H1 (cell line): ENCODE measurements at regions of chr6 and their contacts with region 1.

Region 1: GRCh38 chr6:99568103-99568933 is at the start of gene CCNC:
- DNase-seq: peak; percentile 93 to 97
- H3K4me3 ChIP-seq: peak within 1 kb of the TSS; percentile 81 to 98 (median 96)
- H3K27ac ChIP-seq: peak within 1 kb of the TSS; percentile 95
- H3K4me1 ChIP-seq: peaks cover 0 to 2% (median 0%) of the 10 kb centered on the region in 4 experiments; a peak in 1 of 7 replicates
- H3K27me3 ChIP-seq: no peaks in the 10 kb centered on the region
- CTCF ChIP-seq: no peak
- EP300 ChIP-seq: peak; percentile 24 to 89
- POLR2A ChIP-seq: peak; percentile 95 to 99
- RAD21 ChIP-seq: no peak; a peak in 1 of 4 replicates
- total RNA-seq, gene CCNC: 94.5 and 107 TPM in 2 replicates

Region 2: DNA sequence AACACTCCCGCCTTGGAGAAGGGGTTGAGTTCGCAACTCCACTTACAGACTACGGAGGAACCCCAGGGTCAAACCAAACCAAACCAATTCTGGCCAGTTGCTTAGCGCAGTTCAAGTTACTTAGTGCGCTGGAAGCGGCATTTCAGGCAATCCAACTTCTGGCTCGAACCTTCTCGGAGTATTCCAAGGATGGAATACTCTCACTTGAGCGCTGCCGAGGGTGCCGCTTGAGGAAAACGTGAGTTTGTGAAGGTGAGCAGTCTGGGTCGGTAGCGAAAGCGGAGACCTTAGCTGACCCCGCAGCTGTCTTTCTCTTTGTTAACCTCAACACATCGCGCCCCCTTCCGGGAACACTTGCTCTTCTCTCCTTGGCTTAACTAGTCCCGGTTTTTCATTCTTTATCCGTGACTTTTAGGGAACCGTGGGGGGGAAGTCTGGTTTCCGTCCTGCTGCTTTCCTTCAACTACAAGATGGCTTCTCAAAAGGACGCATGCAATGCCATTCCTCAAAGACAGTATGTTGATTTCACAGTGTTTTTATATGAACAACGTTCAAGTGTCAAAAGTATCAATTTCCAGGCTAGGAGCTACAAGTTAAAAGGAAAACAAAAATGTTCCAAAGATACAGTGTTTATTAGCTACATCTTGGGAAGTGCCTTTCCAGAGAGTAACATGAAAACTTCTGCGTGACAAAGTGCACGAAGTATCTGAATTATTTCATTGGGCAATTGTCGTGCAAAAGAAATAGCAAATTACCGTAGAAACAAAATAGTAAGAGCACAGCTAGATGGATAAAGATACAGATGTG is 142.5 kb before region 1 on chr6:
- CTCF ChIA-PET with region 1: no interaction called
- POLR2A ChIA-PET with region 1: interaction called, 26 read pairs
- DNase-seq: peak; percentile 87 to 90
- H3K4me3 ChIP-seq: peak overlapping the region; percentile 79 to 99 (median 92)
- H3K27ac ChIP-seq: peak overlapping the region; percentile 97
- H3K4me1 ChIP-seq: peaks cover 0 to 11% (median 5%) of the 10 kb centered on the region in 4 experiments; a peak in 4 of 7 replicates
- H3K27me3 ChIP-seq: no peaks in the 10 kb centered on the region
- CTCF ChIP-seq: peak; percentile 37 to 63 (median 44); a peak in 3 of 4 replicates
- EP300 ChIP-seq: peak in 1 of 2 experiments; percentile 85; a peak in 1 of 3 replicates
- POLR2A ChIP-seq: peak in 1 of 2 experiments; percentile 79; a peak in 2 of 3 replicates
- RAD21 ChIP-seq: peak; percentile 34 to 42

Region 3: DNA sequence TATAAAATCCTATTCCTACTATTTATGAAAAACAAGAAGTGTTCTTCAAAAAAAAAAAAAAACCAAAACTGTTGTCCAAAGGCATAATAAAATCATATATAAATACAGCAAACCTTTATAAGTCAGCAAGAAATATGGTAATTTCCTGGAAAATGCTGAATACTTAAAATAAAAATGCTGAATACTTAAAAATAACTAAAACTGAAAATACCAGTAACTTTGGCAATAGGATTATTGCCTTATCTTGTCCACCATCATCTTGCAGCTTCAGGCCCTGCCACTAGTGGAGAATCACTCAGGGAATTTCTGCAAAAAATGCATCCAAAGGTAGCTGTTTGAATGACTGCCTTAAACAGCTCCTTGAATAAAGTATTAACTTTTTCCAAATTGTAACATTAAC is 24.4 kb before region 1 on chr6:
- CTCF ChIA-PET with region 1: interaction called, 3 read pairs
- POLR2A ChIA-PET with region 1: interaction called, 16 read pairs
- DNase-seq: no peak
- H3K4me3 ChIP-seq: no peak overlapping the region
- H3K27ac ChIP-seq: no peak overlapping the region
- H3K4me1 ChIP-seq: no peaks in the 10 kb centered on the region
- H3K27me3 ChIP-seq: no peaks in the 10 kb centered on the region
- CTCF ChIP-seq: no peak
- EP300 ChIP-seq: no peak
- POLR2A ChIP-seq: no peak
- RAD21 ChIP-seq: no peak

Region 4: DNA sequence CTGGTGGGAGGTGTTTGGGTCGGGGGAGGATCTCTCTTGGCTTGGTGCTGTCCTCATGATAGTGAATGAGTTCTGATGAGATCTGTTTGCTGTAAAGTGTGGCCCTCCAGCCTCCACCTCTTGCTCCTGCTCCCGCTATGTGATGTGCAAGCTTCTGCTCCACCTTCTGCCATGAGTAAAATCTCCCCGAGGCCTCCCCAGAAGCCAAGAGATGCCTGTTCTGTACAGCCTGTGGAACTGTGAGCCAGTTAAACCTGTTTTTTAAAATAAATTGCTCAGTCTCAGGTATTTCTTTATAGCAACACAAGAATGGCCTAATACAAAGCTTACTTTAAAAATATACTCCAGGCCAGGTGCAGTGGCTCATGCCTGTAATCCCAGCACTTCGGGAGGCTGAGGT is 11.5 kb after region 1 on chr6:
- CTCF ChIA-PET with region 1: interaction called, 3 read pairs
- POLR2A ChIA-PET with region 1: interaction called, 18 read pairs
- DNase-seq: no peak
- H3K4me3 ChIP-seq: no peak overlapping the region
- H3K27ac ChIP-seq: no peak overlapping the region
- H3K4me1 ChIP-seq: no peaks in the 10 kb centered on the region
- H3K27me3 ChIP-seq: peaks cover 0 to 10% (median 4%) of the 10 kb centered on the region in 4 experiments; a peak in 4 of 7 replicates
- CTCF ChIP-seq: no peak
- EP300 ChIP-seq: no peak
- POLR2A ChIP-seq: no peak
- RAD21 ChIP-seq: no peak

Region 5: GRCh38 chr6:99603421-99604165 is 35.3 kb after region 1 on chr6:
- CTCF ChIA-PET with region 1: interaction called, 7 read pairs
- POLR2A ChIA-PET with region 1: interaction called, 18 read pairs
- DNase-seq: peak in 1 of 2 experiments; percentile 89
- H3K4me3 ChIP-seq: peak overlapping the region in 3 of 4 experiments; percentile 22 to 53 (median 26); a peak in 6 of 8 replicates
- H3K27ac ChIP-seq: no peak overlapping the region
- H3K4me1 ChIP-seq: peaks cover 0 to 26% (median 9%) of the 10 kb centered on the region in 4 experiments; a peak in 5 of 7 replicates
- H3K27me3 ChIP-seq: peaks cover 89 to 98% (median 91%) of the 10 kb centered on the region in 4 experiments
- CTCF ChIP-seq: no peak
- EP300 ChIP-seq: no peak
- POLR2A ChIP-seq: no peak
- RAD21 ChIP-seq: no peak

Region 6: GRCh38 chr6:99618649-99619408 is 50.5 kb after region 1 on chr6:
- CTCF ChIA-PET with region 1: interaction called, 4 read pairs
- POLR2A ChIA-PET with region 1: interaction called, 14 read pairs
- DNase-seq: peak in 1 of 2 experiments; percentile 87
- H3K4me3 ChIP-seq: peak overlapping the region; percentile 36 to 58 (median 42)
- H3K27ac ChIP-seq: no peak overlapping the region
- H3K4me1 ChIP-seq: peaks cover 0 to 9% (median 7%) of the 10 kb centered on the region in 4 experiments; a peak in 5 of 7 replicates
- H3K27me3 ChIP-seq: peaks cover 54 to 78% (median 63%) of the 10 kb centered on the region in 4 experiments
- CTCF ChIP-seq: no peak
- EP300 ChIP-seq: no peak
- POLR2A ChIP-seq: no peak
- RAD21 ChIP-seq: no peak